Endothelial cell of umbilical vein (primary cell): ENCODE measurements at regions of chr3 and their contacts with region 1.

Region 1: DNA sequence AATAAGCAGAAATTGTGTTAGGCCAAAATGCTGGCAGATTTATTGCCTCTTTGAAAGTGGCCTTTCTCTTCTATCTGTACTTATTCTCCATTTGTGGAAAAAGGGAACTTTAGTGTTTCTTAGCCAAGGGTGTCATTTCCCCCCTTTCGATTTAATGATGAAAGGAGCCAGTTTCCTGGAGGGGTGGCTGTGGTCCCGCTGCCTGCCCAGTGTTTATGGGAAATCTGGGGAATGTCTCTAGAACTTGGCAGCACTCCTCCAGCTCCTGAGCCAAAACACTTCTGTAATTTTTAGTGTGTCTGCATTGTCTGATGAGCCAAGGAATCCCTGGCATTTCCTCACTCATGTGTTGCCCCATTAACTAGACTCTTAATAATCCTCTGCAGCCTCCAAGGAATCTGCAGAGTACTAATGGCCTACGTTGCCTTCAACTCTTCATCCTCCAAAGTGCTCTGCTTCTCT is 448.8 kb downstream of the GRM7 start:
- DNase-seq: peak; percentile 98
- H3K4me3 ChIP-seq: no peak overlapping the region
- H3K27ac ChIP-seq: peak overlapping the region; percentile 96
- H3K4me1 ChIP-seq: peaks cover 55% of the 10 kb centered on the region
- H3K27me3 ChIP-seq: no peaks in the 10 kb centered on the region
- CTCF ChIP-seq: no peak
- POLR2A ChIP-seq: no peak

Region 2: GRCh38 chr3:6449099-6449498 is 860.6 kb before region 1 on chr3:
- CTCF ChIA-PET with region 1: no interaction called
- POLR2A ChIA-PET with region 1: no interaction called
- dilution Hi-C with region 1: no loop called
- intact Hi-C with region 1: loop called (anchors 2 kb)
- DNase-seq: peak; percentile 87
- H3K4me3 ChIP-seq: no peak overlapping the region
- H3K27ac ChIP-seq: peak overlapping the region; percentile 76
- H3K4me1 ChIP-seq: peaks cover 40% of the 10 kb centered on the region
- H3K27me3 ChIP-seq: no peaks in the 10 kb centered on the region
- CTCF ChIP-seq: no peak
- POLR2A ChIP-seq: no peak

Region 3: GRCh38 chr3:7346364-7346763 is 36.7 kb after region 1 on chr3:
- CTCF ChIA-PET with region 1: interaction called, 6 read pairs
- POLR2A ChIA-PET with region 1: no interaction called
- dilution Hi-C with region 1: no loop called
- intact Hi-C with region 1: loop called (anchors 1 kb)
- DNase-seq: peak; percentile 97
- H3K4me3 ChIP-seq: peak overlapping the region in 1 of 3 experiments; percentile 6
- H3K27ac ChIP-seq: peak overlapping the region; percentile 97
- H3K4me1 ChIP-seq: peaks cover 24% of the 10 kb centered on the region
- H3K27me3 ChIP-seq: no peaks in the 10 kb centered on the region
- CTCF ChIP-seq: no peak
- POLR2A ChIP-seq: peak; percentile 19

Region 4: DNA sequence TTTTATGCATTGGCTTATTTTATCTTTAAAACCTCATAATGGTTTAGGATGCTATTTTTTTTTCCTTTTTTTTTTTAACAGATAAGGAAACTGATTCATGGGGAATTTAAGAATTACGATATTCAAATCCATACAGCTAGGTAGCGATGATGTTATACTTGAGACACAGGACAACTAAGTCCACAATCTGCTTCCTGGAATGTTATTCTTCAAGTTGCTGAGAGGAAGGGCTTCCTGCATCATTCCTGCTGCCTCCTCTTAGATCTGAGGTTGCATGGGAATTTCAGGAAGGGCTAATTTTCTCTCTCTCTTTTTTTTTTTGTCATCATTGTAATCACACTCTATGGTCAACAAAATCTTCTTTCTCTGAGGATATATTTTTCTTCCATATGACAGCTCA is 146.7 kb after region 1 on chr3:
- CTCF ChIA-PET with region 1: no interaction called
- POLR2A ChIA-PET with region 1: interaction called, 4 read pairs
- dilution Hi-C with region 1: no loop called
- intact Hi-C with region 1: loop called (anchors 2 kb)
- DNase-seq: peak; percentile 69
- H3K4me3 ChIP-seq: no peak overlapping the region
- H3K27ac ChIP-seq: peak overlapping the region; percentile 23
- H3K4me1 ChIP-seq: peaks cover 12% of the 10 kb centered on the region
- H3K27me3 ChIP-seq: no peaks in the 10 kb centered on the region
- CTCF ChIP-seq: no peak
- POLR2A ChIP-seq: no peak

Region 5: GRCh38 chr3:7630925-7631324 is 321.3 kb after region 1 on chr3:
- CTCF ChIA-PET with region 1: no interaction called
- POLR2A ChIA-PET with region 1: no interaction called
- dilution Hi-C with region 1: no loop called
- intact Hi-C with region 1: no loop called
- DNase-seq: peak; percentile 75
- H3K4me3 ChIP-seq: no peak overlapping the region
- H3K27ac ChIP-seq: peak overlapping the region; percentile 23
- H3K4me1 ChIP-seq: peaks cover 13% of the 10 kb centered on the region
- H3K27me3 ChIP-seq: no peaks in the 10 kb centered on the region
- CTCF ChIP-seq: peak in 1 of 2 donors; percentile 36
- POLR2A ChIP-seq: no peak

Region 6: GRCh38 chr3:7682822-7683229 is 373.2 kb after region 1 on chr3:
- CTCF ChIA-PET with region 1: no interaction called
- POLR2A ChIA-PET with region 1: no interaction called
- dilution Hi-C with region 1: no loop called
- intact Hi-C with region 1: loop called (anchors 2 kb)
- DNase-seq: peak; percentile 97
- H3K4me3 ChIP-seq: no peak overlapping the region
- H3K27ac ChIP-seq: peak overlapping the region; percentile 67
- H3K4me1 ChIP-seq: peaks cover 21% of the 10 kb centered on the region
- H3K27me3 ChIP-seq: no peaks in the 10 kb centered on the region
- CTCF ChIP-seq: no peak
- POLR2A ChIP-seq: no peak

Region 7: DNA sequence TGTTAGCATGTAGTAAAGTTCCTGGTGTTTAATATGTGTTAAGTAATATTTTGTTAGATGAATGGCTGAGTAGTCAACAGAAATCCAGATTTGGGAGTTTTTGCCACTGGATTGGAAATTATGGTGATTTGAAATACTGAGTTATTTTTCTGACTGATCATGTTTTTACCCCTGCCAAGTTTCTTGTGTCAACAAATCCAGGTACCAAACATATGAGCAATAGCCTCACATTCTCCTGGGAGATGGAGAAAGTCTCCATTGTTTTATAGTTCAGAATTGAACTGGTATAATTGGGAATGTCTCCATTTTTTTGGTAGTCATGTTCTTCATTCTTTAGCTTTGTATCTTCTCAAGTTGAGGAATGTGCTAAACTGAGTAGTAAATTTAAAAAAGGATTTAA is 424.8 kb after region 1 on chr3:
- CTCF ChIA-PET with region 1: no interaction called
- POLR2A ChIA-PET with region 1: interaction called, 3 read pairs
- dilution Hi-C with region 1: no loop called
- intact Hi-C with region 1: loop called (anchors 1 kb)
- DNase-seq: peak; percentile 71
- H3K4me3 ChIP-seq: no peak overlapping the region
- H3K27ac ChIP-seq: peak overlapping the region; percentile 85
- H3K4me1 ChIP-seq: peaks cover 33% of the 10 kb centered on the region
- H3K27me3 ChIP-seq: no peaks in the 10 kb centered on the region
- CTCF ChIP-seq: no peak
- POLR2A ChIP-seq: no peak